Activated CD4-positive, alpha-beta T cell treated with anti-CD3 and anti-CD28 coated beads, Interleukin-2, amount 10 ng/mL, durations not matched to agents 24 days and 14 days (primary cell): ENCODE measurements at regions of chr17 and their contacts with region 1.

Region 1: DNA sequence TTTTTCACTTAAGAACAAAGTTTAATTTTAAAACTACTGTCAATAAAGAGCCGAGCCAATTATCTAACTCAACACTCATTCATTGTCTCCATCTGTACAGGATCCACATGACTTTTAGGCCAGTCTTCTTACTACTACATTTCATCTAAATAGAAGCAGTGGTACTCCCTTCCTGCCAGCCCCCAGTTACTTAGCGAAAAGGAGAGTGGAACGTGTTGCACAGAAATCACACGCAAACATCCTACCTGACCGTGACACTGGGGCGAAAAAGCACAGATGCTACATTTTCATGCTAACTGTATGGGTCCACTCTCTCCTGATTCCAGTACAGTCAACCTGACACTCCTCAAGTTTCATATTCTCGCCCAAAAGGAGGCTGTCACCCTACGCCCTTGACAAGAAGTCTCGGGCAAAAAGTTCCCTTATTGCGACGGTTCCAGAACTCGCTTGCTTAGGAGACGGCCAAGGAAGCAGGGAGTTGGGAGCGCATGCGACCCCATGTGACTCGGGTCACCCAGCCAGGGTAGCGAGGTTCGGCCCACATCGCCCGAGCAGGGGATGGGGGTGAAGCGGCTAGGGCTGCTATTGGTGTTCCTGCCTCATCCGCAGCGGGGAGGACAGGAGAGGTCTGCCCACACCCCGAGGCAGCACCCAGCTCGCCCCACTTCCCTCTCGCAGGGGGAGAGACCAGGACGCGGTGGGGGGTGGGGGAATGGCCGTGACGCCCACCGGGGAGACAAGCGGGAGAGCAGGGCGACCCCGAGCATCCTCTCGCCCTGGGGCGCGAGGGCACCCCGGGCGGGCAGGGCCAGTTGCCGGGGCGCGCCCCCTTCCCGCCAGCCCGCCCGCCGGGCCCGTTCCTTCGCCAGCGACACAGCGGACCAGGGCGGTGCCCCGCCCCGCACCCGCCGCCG is 935 bp downstream of the GNA13 start:
- DNase-seq: peak; percentile 89
- H3K4me3 Mint-ChIP-seq: peak overlapping the region; percentile 97
- H3K27ac Mint-ChIP-seq: peak overlapping the region; percentile 92
- H3K4me1 Mint-ChIP-seq: peaks cover 43% of the 10 kb centered on the region
- H3K27me3 Mint-ChIP-seq: peaks cover 6% of the 10 kb centered on the region

Region 2: GRCh38 chr17:64984851-64985521 is 70.6 kb before region 1 on chr17:
- intact Hi-C with region 1: loop called (anchors 1 kb)
- DNase-seq: peak; percentile 88
- H3K4me3 Mint-ChIP-seq: peak overlapping the region; percentile 83
- H3K27ac Mint-ChIP-seq: peak overlapping the region; percentile 99
- H3K4me1 Mint-ChIP-seq: peaks cover 51% of the 10 kb centered on the region
- H3K27me3 Mint-ChIP-seq: no peaks in the 10 kb centered on the region

Region 3: DNA sequence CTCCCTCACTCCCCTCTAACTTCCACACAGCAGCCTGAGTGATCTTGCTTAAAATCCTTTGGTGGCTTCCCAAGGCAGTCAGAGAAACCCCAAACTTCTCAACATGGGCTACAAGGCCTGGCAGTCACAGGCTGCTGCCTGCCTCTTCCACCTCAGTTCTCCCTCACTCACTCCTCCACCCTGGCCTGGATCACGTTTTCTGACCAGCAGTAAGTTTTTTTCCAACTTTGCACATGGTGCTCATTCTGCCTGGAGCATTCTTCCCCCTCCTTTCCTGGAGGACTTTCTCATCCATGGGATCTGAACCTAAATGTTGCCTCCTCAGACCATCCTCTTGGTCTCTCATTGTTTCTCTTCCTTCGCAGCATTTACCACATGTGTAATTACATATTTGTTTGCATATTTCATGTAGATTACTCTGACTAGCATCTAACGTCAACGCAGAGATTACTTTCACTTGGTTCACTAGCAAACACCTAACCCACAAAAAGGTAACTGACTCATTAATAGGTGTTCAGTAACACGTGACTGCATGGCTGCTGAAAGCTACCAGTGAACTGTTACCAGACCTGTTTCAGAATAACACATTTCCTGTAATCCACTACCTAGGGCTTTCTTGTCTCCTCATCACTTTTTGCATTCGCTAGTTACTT is 16.1 kb before region 1 on chr17:
- intact Hi-C with region 1: loop called (anchors 2 kb)
- DNase-seq: peak; percentile 85
- H3K4me3 Mint-ChIP-seq: peak overlapping the region; percentile 68
- H3K27ac Mint-ChIP-seq: peak overlapping the region; percentile 79
- H3K4me1 Mint-ChIP-seq: peaks cover 66% of the 10 kb centered on the region
- H3K27me3 Mint-ChIP-seq: no peaks in the 10 kb centered on the region

Region 4: DNA sequence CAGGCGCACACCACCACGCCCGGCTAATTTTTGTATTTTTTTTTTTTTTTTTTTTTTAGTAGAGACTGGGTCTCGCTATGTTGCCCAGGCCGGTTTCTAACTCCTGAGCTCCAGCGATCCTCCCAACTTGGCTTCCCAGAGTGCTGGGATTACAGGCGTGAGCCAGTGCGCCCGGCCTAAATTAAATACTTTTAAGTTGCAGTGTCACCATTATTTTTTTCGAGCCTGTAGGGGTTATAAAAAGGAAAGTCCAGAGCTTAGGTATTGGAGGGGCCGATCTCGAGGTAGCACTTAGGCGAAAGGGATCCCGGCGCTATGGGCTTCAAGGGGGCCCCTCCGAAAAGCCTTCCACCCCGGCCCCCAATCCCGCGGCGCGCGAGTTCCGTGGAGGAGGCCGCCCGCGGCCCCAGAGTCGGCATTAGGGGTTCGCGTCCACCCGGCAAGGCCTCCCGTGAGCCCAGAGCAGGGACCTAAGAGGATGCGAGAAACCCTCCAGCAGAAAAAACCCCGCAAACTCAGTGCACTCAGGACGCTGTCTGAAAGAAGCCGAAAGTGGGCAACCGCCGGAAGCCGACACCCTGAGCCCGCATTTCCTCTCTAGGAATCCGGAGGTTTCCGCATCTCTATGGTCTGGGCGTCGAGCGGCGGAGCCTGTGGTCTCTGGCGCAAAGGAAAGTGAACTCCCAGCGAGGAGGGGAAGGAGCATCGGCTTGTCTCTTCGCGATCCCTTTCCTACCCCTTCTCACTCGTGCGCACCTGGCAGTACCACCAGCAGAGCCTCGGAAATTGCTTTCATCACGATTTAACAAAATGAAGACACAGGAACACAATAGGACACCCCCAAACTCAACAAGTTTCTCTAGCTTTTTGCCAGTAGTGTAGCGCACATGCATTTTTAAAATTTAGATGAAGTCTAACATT is 67.5 kb after region 1 on chr17:
- intact Hi-C with region 1: loop called (anchors 2 kb)
- DNase-seq: peak; percentile 96
- H3K4me3 Mint-ChIP-seq: peak overlapping the region; percentile 86
- H3K27ac Mint-ChIP-seq: peak overlapping the region; percentile 97
- H3K4me1 Mint-ChIP-seq: peaks cover 22% of the 10 kb centered on the region
- H3K27me3 Mint-ChIP-seq: peaks cover 12% of the 10 kb centered on the region

Region 5: DNA sequence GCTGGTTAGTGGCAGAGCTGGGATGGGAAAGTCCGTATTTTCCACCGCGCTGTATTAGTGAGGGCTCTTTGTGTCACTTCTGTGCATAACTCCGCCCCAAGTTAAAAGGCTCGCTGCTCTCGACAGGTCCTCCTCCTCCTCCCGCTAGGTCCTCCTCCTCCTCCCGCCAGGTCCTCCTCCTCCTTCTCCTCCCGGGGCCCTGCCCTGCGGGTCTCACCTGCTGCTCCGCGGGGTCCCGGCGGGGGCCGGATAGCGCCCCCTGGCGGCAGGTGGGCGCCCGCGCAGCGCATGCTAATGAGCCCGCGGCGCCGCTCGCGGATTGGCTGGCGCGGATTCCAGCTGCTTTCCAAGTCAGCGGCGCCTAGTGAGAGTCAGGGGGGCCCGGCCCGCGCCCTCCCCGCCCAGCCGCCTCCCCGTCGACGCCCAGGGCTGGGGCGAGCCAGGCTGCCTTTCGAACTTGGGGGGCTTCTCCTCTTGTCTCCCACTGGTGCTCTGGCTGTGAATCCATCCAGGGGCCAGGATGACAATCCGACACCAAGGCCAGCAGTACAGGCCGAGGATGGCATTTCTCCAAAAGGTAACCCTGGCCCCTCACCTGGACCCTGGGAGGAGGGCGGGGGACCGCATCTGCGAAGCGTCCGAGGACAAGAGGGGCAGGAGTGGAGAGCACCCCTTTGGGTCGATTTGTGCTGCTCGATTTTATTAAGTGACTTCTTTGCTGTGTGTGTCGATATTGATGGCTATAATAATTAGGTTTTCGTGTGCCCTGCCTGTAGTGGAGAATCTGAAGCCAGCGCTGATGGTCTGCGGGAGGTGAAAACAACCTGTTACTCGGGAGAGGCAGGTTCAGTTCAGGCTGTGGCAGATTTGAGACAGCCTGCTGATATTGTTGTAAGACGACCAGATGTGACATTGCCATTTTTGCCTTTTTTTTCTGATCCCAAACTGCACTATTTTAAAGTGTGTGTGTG is 81.7 kb after region 1 on chr17 and contains the start of gene RGS9:
- intact Hi-C with region 1: loop called (anchors 5 kb)
- DNase-seq: peak; percentile 97
- H3K4me3 Mint-ChIP-seq: peak within 1 kb of the TSS; percentile 80
- H3K27ac Mint-ChIP-seq: peak within 1 kb of the TSS; percentile 50
- H3K4me1 Mint-ChIP-seq: peaks cover 31% of the 10 kb centered on the region
- H3K27me3 Mint-ChIP-seq: peaks cover 15% of the 10 kb centered on the region
- total RNA-seq, gene RGS9: 2.2 and 3.1 TPM in 2 replicates